ENCODE measurements at regions of chr7 and their contacts with region 1.

Region 1: GRCh38 chr7:48528646-48529045 is 357.4 kb downstream of the ABCA13 start:
- DNase-seq: no peak
- ATAC-seq: peak; percentile 85
- H3K4me3 ChIP-seq: no peak overlapping the region
- H3K27ac ChIP-seq: no peak overlapping the region
- H3K4me1 ChIP-seq: no peaks in the 10 kb centered on the region
- H3K27me3 ChIP-seq: no peaks in the 10 kb centered on the region
- CTCF ChIP-seq: no peak
- EP300 ChIP-seq: no peak
- POLR2A ChIP-seq: no peak
- RAD21 ChIP-seq: no peak

Region 2: DNA sequence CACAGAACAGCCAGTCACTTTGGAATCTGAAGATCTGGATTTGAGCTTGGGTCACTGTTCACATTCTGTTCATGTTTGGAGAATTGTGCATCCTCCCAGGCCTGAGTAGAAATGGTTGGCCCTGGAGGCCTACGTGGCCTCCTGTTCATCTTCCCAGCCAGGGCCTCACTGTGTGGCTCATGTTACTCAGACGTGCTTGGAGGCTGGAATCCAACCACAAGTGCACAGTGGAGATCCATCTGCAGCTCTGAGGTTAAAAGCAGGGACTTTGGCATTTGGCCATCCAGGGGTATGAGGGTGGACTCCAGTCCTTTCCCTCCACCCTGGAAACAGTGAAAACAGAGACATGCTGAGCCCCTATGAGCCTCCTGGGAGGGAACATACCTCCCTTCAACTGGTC is 1898.6 kb before region 1 on chr7:
- CTCF ChIA-PET with region 1: no interaction called
- POLR2A ChIA-PET with region 1: no interaction called
- in situ Hi-C with region 1: no loop called
- intact Hi-C with region 1: loop called (anchors 5 kb)
- DNase-seq: no peak
- ATAC-seq: no peak
- H3K4me3 ChIP-seq: no peak overlapping the region
- H3K27ac ChIP-seq: no peak overlapping the region
- H3K4me1 ChIP-seq: no peaks in the 10 kb centered on the region
- H3K27me3 ChIP-seq: no peaks in the 10 kb centered on the region
- CTCF ChIP-seq: no peak
- EP300 ChIP-seq: no peak
- POLR2A ChIP-seq: no peak
- RAD21 ChIP-seq: no peak

Region 3: DNA sequence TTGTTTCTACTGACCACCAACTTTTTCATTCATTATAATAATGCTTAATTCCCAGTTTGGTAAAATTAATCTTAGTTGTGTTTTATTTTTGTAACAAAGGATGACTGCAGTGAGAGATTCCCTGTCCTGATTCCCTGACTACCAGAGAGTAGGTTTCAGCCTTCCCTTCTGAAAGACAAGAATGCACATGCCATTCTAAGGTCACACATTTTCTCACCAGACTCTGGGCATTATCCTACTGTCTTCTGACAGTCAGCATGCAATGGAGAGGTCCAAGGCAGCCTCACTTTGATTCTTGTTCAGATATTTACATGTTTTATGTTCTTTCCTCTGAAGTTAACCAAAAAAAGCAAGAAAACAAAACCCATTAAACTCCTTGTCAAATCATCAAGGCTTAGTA is 23.0 kb after region 1 on chr7:
- CTCF ChIA-PET with region 1: no interaction called
- POLR2A ChIA-PET with region 1: no interaction called
- in situ Hi-C with region 1: no loop called
- intact Hi-C with region 1: loop called (anchors 1 kb)
- DNase-seq: no peak
- ATAC-seq: no peak
- H3K4me3 ChIP-seq: no peak overlapping the region
- H3K27ac ChIP-seq: no peak overlapping the region
- H3K4me1 ChIP-seq: no peaks in the 10 kb centered on the region
- H3K27me3 ChIP-seq: no peaks in the 10 kb centered on the region
- CTCF ChIP-seq: no peak
- EP300 ChIP-seq: no peak
- POLR2A ChIP-seq: no peak
- RAD21 ChIP-seq: no peak